WTC11 (cell line): ENCODE measurements at regions of chr13 and their contacts with region 1.

Region 1: DNA sequence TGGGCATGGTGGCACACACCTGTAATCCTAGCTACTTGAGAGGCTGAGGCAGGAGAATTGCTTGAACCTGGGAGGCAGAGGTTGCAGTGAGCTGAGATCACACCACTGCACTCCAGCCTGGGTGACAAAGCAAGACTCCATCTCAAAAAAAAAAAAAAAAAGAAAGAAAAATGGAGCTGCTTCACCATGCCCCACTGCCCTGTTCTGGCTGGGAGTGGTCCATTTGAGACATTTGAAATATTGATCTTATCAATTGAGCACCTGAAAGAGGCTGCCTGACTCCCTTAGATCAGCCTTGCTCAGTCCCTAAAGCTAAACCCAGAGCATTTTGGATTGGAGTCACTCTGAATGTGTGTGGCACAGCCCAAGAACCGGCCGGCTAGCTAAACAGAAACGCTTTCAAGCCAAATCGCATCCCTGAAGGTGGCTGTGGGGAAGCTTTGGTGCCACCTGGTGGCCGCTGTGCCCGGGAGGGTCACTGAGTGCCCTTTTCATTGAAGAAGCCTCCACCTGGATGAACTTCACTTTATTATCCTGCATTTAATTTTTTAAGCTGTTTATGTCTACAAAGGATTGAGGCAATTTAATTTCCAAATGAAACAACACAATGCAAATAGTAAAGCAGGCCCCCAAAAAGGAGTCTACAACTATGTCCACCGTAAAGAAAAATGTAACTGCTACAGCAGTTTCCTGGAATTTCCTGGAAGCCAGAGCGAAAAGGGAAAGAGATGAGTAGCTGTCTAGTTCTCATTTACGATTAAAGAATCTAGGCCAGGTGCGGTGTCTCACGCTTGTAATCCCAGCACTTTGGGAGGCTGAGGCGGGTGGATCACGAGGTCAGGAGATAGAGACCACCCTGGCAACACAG is 53.1 kb upstream of the SERPINE3 start:
- DNase-seq: peak; percentile 89
- ATAC-seq: peak; percentile 84
- H3K4me3 Mint-ChIP-seq: no peak overlapping the region
- H3K27ac Mint-ChIP-seq: no peak overlapping the region
- H3K4me1 Mint-ChIP-seq: peaks cover 45% of the 10 kb centered on the region
- H3K27me3 Mint-ChIP-seq: no peaks in the 10 kb centered on the region
- CTCF ChIP-seq: peak; percentile 89

Region 2: DNA sequence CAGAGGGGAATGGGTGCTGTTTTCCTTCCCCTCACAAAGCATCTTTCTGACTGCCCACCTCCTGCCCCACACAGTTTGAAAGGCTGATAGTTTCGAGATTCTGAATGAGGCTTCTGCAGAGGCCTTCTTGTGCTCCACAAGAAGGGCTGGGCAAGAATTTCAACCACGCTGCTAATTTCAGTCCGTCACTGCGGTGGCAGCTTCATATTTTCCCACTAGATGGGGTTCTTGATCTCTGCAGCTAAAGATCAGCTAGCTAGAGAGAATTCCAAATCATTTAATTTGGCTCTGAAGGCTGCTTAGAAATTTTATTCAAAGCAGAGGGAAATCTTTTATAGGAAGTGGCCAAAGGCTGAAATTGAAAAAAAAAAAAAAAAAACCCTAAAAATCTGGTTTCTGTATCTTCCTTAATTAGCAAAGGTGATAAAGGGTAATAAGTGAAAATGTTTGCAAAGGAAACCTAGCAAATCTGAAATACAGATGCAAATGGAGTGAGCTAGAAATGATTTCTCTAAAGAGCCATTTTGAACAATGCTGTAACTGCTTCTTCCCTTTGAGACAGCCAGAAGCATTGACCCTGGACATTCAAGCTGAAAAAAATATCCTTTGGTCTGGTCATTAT is 137.3 kb before region 1 on chr13:
- CTCF ChIA-PET with region 1: interaction called, 120 read pairs
- POLR2A ChIA-PET with region 1: no interaction called
- DNase-seq: peak; percentile 68
- ATAC-seq: peak; percentile 55
- H3K4me3 Mint-ChIP-seq: no peak overlapping the region
- H3K27ac Mint-ChIP-seq: peak overlapping the region; percentile 95
- H3K4me1 Mint-ChIP-seq: peaks cover 71% of the 10 kb centered on the region
- H3K27me3 Mint-ChIP-seq: no peaks in the 10 kb centered on the region; the same call in 1 of the 2 replicates
- CTCF ChIP-seq: no peak

Region 3: DNA sequence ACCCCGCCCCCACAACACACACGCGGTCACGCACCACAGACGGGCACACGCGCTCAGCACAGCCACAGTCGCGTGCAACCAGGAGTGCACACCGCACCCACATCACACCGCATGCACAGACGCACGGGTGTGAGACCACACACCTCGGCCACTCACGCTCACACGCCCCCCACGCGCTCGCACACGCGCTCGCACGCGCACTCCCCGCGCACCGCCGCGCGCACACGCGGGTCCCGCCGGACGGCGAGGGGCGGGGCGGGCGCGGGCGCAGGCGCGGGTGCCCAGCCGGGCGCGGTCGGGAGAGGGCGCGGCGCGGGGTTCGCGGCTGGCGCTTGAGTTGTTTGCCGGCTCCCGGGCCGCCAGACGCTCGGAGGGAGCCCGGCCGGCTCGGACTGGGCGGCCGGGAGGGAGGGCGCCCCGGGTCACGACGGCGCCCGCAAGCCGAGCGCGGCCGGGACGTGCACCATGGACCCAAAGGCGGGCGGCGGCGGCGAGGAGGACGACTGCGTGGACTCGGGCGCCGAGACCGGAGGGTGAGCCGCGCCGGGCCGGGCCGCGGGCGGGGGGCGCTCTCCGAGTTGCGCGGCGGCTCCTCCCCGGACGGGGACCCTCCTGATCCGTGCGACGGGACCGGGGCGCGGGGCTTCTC is 64.2 kb before region 1 on chr13 and contains the start of gene FAM124A:
- CTCF ChIA-PET with region 1: interaction called, 59 read pairs
- POLR2A ChIA-PET with region 1: interaction called, 4 read pairs
- DNase-seq: peak; percentile 61
- ATAC-seq: peak; percentile 69
- H3K4me3 Mint-ChIP-seq: peak within 1 kb of the TSS; percentile 92
- H3K27ac Mint-ChIP-seq: peak within 1 kb of the TSS; percentile 68
- H3K4me1 Mint-ChIP-seq: peaks cover 57% of the 10 kb centered on the region
- H3K27me3 Mint-ChIP-seq: peaks cover 15% of the 10 kb centered on the region
- CTCF ChIP-seq: no peak; the same call in 1 of the 2 replicates
- total RNA-seq, gene FAM124A: 41.2 to 45.8 TPM (median 41.6 TPM) in 3 replicates

Region 4: GRCh38 chr13:51252954-51253532 is 33.3 kb before region 1 on chr13:
- CTCF ChIA-PET with region 1: interaction called, 10 read pairs
- POLR2A ChIA-PET with region 1: no interaction called
- DNase-seq: no peak
- ATAC-seq: no peak
- H3K4me3 Mint-ChIP-seq: no peak overlapping the region
- H3K27ac Mint-ChIP-seq: peak overlapping the region; percentile 10; the same call in 1 of the 2 replicates
- H3K4me1 Mint-ChIP-seq: peaks cover 45% of the 10 kb centered on the region
- H3K27me3 Mint-ChIP-seq: no peaks in the 10 kb centered on the region
- CTCF ChIP-seq: no peak

Region 5: DNA sequence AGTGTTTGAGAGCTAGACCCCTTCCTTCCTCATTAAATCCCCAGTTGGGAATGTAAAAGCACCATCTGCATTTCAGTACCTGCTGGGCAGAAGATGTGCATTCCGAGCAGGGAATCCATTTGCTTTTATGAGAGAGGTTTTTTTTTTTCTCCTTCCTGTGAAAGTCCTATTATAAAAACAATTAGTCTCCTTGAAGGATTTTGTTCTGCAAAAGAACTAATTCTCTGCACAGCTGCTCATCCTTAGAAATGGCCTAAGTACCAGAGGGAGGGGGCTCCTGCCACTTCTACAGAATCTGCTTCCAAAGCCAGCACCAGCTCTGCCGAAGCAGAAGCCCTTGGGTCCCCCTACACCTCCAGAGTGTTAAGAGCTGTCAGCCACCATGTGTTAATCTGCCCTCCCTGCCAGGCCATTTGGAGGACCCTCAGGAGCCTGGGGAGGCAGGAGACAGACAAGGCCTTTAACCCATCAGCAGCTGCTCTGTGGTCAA is 16.7 kb after region 1 on chr13:
- CTCF ChIA-PET with region 1: interaction called, 44 read pairs
- POLR2A ChIA-PET with region 1: no interaction called
- DNase-seq: peak; percentile 58
- ATAC-seq: peak; percentile 90
- H3K4me3 Mint-ChIP-seq: peak overlapping the region; percentile 4; the same call in 1 of the 2 replicates
- H3K27ac Mint-ChIP-seq: peak overlapping the region; percentile 88
- H3K4me1 Mint-ChIP-seq: peaks cover 84% of the 10 kb centered on the region
- H3K27me3 Mint-ChIP-seq: peaks cover 7% of the 10 kb centered on the region
- CTCF ChIP-seq: no peak

Region 6: GRCh38 chr13:51767100-51767499 is 480.7 kb after region 1 on chr13:
- CTCF ChIA-PET with region 1: interaction called, 10 read pairs
- POLR2A ChIA-PET with region 1: no interaction called
- DNase-seq: no peak
- ATAC-seq: peak; percentile 38
- H3K4me3 Mint-ChIP-seq: no peak overlapping the region
- H3K27ac Mint-ChIP-seq: no peak overlapping the region; the same call in 1 of the 2 replicates
- H3K4me1 Mint-ChIP-seq: peaks cover 23% of the 10 kb centered on the region
- H3K27me3 Mint-ChIP-seq: no peaks in the 10 kb centered on the region
- CTCF ChIP-seq: no peak